OCI-LY7 (cell line): ENCODE measurements at regions of chr17 and their contacts with region 1.

Region 1: GRCh38 chr17:8138672-8139371 is 13.4 kb downstream of the PER1 start:
- DNase-seq: peak; percentile 95
- H3K4me3 ChIP-seq: peak overlapping the region; percentile 70
- H3K27ac ChIP-seq: peak overlapping the region; percentile 74
- H3K4me1 ChIP-seq: peaks cover 18% of the 10 kb centered on the region
- CTCF ChIP-seq: peak; percentile 93

Region 2: DNA sequence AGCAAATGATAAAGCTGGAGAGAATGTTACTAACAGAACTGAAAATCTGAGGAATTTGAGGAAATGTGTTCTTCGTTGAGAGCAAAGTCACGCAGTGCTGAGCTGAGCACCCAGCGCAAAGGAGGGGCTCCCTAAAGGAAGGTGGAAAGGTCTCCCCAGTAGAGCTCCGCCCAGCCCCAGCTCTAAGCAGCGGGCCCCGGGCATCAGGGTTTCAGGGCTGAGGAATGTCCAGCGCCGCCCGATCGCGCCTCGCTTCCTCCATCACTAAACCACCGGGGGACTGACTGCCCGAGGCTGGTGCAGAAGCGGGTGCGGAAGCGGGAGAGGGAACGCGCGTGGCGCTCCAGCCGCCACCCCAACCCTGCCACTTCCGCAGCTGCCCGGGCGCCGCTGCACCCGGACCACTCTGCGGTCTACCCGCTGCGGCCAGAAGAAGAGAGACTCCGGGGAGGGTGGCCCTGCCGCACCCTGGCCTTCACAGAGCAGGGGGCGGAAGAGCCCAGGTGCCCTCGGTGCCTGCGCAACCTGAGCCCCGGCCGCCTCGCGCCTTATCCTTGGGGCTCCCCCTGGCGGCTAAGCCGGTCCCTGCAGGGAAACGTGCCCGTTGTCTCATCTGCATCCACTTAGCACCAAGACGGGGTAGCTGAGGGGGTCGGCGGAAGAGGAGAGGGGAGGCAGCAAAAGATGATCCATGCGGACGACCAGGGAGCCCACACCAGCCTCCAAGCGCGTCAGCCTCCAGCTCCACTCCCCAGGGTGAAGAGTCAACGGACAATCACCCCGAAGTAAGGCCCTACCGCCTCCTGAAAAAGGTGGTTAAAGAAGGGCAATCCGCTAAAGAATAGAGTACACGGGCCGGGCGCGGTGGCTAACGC is 148.8 kb before region 1 on chr17:
- CTCF ChIA-PET with region 1: no interaction called
- POLR2A ChIA-PET with region 1: no interaction called
- intact Hi-C with region 1: no loop called
- DNase-seq: peak; percentile 90
- H3K4me3 ChIP-seq: peak overlapping the region; percentile 68
- H3K27ac ChIP-seq: peak overlapping the region; percentile 55
- H3K4me1 ChIP-seq: peaks cover 13% of the 10 kb centered on the region
- CTCF ChIP-seq: peak; percentile 89

Region 3: GRCh38 chr17:8125157-8125946 is 13.5 kb before region 1 on chr17:
- CTCF ChIA-PET with region 1: interaction called, 3 read pairs
- POLR2A ChIA-PET with region 1: interaction called, 7 read pairs
- intact Hi-C with region 1: loop called (anchors 1 kb)
- DNase-seq: peak; percentile 85
- H3K4me3 ChIP-seq: peak overlapping the region; percentile 79
- H3K27ac ChIP-seq: peak overlapping the region; percentile 40
- H3K4me1 ChIP-seq: peaks cover 46% of the 10 kb centered on the region
- CTCF ChIP-seq: no peak

Region 4: GRCh38 chr17:8151123-8151640 is 12.4 kb after region 1 on chr17:
- CTCF ChIA-PET with region 1: no interaction called
- POLR2A ChIA-PET with region 1: interaction called, 4 read pairs
- intact Hi-C with region 1: loop called (anchors 1 kb)
- DNase-seq: peak; percentile 89
- H3K4me3 ChIP-seq: peak overlapping the region; percentile 82
- H3K27ac ChIP-seq: peak overlapping the region; percentile 70
- H3K4me1 ChIP-seq: peaks cover 47% of the 10 kb centered on the region
- CTCF ChIP-seq: no peak

Region 5: GRCh38 chr17:8156246-8156992 is 17.6 kb after region 1 on chr17:
- CTCF ChIA-PET with region 1: interaction called, 5 read pairs
- POLR2A ChIA-PET with region 1: interaction called, 3 read pairs
- intact Hi-C with region 1: loop called (anchors 1 kb)
- DNase-seq: peak; percentile 100
- H3K4me3 ChIP-seq: peak overlapping the region; percentile 75
- H3K27ac ChIP-seq: peak overlapping the region; percentile 80
- H3K4me1 ChIP-seq: peaks cover 60% of the 10 kb centered on the region
- CTCF ChIP-seq: peak; percentile 43; the same call in 1 of the 2 replicates

Region 6: DNA sequence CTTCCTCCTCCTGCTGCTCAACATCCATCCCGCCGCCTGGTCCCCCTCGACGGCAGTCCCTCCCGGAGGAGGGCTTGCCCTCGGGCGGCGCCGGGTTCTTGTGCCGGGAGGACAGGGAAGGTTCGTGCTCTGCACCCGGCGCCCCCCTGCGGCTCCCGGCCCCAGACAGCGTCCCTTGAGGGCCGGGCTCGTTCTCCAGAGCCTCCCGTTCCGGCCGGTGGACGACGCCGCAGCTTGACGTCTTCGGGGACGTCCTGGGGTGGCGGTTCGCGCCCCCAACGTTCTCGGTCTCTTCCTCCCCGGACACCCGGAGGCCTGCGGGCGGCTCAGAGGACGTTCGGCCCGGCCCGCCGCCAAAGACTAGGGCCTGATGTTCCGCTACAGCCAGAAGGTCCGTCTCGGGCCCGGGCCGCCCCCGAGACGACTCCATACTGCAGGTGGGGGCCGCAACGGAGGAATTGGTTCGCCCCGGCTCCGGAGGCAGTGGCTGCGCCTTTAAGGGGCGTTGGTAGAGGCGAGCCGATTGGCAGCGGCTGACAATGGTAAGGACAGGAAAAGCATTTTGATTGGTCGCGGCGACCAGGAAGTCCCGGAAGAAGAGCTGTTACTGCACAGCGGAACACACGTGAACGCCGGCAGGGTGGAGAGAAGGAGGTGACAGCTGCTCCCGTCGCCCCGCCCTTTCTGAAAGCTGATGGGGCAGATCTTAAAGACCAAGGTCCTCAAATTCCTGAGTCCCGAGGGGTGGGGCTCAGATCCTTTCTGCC is 51.1 kb after region 1 on chr17 and contains the start of gene BORCS6:
- CTCF ChIA-PET with region 1: no interaction called
- POLR2A ChIA-PET with region 1: no interaction called
- intact Hi-C with region 1: loop called (anchors 1 kb)
- DNase-seq: peak; percentile 99
- H3K4me3 ChIP-seq: peak within 1 kb of the TSS; percentile 83
- H3K27ac ChIP-seq: peak within 1 kb of the TSS; percentile 92
- H3K4me1 ChIP-seq: peaks cover 39% of the 10 kb centered on the region
- CTCF ChIP-seq: peak; percentile 52
- total RNA-seq, gene BORCS6: 13.9 and 14.3 TPM in 2 replicates

Region 7: GRCh38 chr17:8222630-8223356 is 84.0 kb after region 1 on chr17:
- CTCF ChIA-PET with region 1: no interaction called
- POLR2A ChIA-PET with region 1: no interaction called
- intact Hi-C with region 1: loop called (anchors 1 kb)
- DNase-seq: peak; percentile 89
- H3K4me3 ChIP-seq: peak overlapping the region; percentile 80
- H3K27ac ChIP-seq: peak overlapping the region; percentile 88
- H3K4me1 ChIP-seq: peaks cover 21% of the 10 kb centered on the region
- CTCF ChIP-seq: no peak

Region 8: DNA sequence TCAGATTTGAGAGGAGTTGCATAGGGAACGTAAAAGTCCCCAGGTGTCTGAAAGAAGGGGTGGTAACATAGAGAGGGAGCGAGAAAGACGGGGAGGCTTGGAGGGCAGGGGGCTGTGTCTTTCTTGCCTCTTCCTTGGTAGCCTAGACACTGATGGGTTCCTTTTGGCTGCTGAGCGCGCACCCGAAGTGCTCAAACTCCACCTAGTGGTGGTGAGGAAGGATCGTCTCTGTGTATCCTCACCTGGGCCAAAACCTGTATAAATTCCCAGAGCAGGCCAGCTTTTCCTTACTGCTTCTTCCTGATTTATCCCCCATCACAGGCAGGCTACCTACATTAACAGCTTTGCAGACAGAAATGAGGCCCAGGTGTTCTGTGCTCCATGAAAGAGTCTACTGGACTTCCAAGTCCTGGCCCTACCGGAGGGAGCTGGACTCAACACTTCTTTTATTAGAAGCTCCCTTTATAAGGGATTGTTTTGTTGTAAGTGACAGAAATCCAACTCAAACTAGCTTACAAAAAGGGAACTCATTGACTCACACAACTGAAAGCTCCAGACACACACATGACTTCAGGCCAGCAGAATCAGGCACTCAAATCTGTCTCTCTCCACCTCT is 161.9 kb after region 1 on chr17:
- CTCF ChIA-PET with region 1: no interaction called
- POLR2A ChIA-PET with region 1: no interaction called
- intact Hi-C with region 1: loop called (anchors 5 kb)
- DNase-seq: peak; percentile 87
- H3K4me3 ChIP-seq: no peak overlapping the region
- H3K27ac ChIP-seq: peak overlapping the region; percentile 4
- H3K4me1 ChIP-seq: peaks cover 6% of the 10 kb centered on the region
- CTCF ChIP-seq: peak; percentile 94